ENCODE measurements at regions of chr9 and their contacts with region 1.

Region 1: DNA sequence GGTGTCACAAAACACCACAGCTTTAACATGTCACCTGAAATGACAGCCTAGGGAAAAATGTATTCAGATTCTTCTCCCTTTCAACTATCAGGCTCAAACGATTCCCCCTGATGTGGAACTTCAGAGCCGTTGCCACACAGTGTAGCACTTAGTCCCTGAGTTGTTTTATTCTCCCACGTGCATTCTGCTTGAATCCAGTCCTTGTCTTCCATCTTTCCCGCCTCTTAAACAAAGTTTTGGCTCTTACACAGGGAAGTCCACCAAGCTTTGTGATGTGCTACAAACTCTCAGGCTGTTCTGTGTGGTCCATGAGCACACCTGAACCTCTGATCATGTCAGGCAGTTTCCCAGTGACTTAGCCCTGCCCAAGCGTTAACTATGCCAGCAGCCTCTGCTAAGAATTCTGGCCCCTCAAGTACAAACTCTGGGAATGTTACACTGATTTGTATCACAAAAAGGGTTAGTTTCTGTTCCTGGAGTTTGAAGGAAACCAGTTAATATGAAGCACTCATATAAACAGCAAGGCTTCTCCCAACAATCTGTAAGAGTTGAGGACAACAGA is 45.8 kb upstream of the RNF38 start:
- DNase-seq: peak; percentile 27
- H3K4me3 ChIP-seq: no peak overlapping the region
- H3K27ac ChIP-seq: peak overlapping the region in 2 of 3 donors; percentile 6 to 51
- H3K4me1 ChIP-seq: peaks cover 17 to 22% of the 10 kb centered on the region in 2 donors
- H3K27me3 ChIP-seq: no peaks in the 10 kb centered on the region
- CTCF ChIP-seq: no peak
- POLR2A ChIP-seq: no peak

Region 2: DNA sequence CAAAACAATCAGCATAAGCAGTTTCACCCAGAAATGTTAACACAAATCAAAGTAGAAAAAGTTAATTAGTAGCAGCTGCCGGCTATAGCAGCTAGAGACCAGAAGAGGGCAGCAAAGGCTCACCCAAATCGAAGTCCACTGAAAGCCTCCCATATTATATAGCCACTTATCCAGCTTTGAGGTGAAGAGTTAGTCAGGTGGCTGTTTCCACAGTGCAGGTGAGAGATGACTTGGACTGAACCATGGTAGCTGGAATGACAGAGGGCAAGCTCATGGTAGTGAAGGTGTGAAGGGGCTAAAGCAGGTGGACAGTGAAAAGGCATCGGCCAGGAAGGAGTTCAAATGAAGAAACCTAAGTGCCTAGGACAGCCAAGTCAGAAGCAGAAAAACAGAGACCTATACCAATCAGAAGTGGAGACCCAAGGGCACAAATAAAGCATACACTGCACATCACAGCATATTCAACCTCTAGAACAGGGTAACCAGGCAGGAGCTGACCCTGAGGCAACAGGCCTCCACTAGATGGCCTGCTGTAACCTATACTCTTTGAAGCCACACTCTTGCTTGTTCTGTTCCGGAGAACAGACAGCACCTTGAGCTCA is 38.7 kb before region 1 on chr9:
- intact Hi-C with region 1: loop called (anchors 5 kb)
- DNase-seq: peak; percentile 57 to 60
- H3K4me3 ChIP-seq: no peak overlapping the region
- H3K27ac ChIP-seq: peak overlapping the region; percentile 11 to 46 (median 18)
- H3K4me1 ChIP-seq: peaks cover 23 to 27% of the 10 kb centered on the region in 2 donors
- H3K27me3 ChIP-seq: no peaks in the 10 kb centered on the region
- CTCF ChIP-seq: peak; percentile 86 to 97 (median 92)
- POLR2A ChIP-seq: no peak

Region 3: DNA sequence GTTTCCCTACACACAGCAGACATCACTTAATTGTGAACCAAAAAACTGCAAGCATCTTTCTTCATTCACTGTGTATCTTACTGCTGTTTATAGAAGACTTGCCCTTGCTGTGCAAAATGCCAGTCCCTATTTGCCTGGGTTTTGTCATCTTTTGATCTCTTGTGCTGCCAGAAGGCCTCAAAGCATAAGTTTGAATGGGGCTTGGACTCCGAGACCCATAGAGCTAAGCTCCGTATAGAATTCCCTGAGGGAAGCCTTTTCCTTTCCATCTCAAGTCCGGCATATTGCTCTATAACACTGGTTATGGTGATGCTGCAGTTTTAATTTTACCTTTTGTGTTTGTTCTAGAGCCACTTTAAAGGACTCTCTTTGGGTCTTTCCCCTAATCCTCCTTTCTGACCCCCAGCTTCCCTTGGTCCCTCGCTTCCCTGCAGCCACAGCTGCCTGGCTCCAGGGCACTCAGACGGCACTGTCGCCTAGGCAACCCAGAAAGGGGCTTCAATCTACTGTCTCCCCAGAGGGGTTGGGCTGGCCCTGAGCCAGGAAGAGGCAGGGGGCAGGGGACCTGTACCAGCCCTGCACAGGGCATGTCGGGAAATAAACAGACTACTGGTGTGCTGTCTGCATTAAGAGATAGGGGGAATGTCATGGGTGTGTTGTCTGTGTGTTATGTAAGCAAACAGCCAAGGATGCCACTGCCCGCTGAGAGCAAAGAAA is 53.5 kb after region 1 on chr9:
- intact Hi-C with region 1: no loop called
- DNase-seq: no peak
- H3K4me3 ChIP-seq: no peak overlapping the region
- H3K27ac ChIP-seq: no peak overlapping the region
- H3K4me1 ChIP-seq: no peaks in the 10 kb centered on the region
- H3K27me3 ChIP-seq: no peaks in the 10 kb centered on the region
- CTCF ChIP-seq: no peak
- POLR2A ChIP-seq: no peak